Posterior vena cava (tissue), 2 donors: ENCODE measurements at regions of chr5 and their contacts with region 1.

Region 1: DNA sequence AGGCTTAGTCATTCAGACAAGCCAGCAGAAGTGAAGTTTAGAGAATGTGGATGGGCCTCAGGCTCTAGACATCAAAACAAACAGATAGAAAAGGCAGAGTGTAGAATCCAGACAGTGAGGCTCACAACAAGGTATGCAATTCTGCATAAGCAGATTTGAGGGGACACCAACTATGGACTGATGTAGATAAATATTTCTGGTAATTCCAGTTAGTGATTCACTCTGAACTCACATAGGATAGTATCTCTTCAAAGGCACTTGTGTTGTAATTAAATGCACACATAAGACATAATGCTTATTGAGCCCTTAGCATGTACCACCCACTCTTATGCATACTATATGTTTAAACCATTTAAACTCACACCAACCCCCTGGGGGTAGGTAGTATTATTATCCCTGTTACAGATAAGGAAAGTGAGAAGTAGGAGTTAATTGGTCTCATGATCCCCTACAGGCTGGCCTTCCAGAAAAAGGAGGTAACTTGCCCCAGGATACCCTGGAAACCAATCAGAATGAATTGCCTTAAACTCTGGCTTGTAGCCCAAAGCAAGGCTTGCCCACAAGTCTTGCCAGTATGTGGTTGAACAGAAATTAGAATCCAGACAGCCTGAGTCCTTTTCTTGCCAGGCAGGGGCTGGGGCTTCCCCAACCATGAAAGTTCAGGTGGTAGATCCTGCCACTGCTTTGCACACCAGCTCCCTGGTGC is 39.5 kb upstream of the HSPB3 start:
- DNase-seq: no peak

Region 2: DNA sequence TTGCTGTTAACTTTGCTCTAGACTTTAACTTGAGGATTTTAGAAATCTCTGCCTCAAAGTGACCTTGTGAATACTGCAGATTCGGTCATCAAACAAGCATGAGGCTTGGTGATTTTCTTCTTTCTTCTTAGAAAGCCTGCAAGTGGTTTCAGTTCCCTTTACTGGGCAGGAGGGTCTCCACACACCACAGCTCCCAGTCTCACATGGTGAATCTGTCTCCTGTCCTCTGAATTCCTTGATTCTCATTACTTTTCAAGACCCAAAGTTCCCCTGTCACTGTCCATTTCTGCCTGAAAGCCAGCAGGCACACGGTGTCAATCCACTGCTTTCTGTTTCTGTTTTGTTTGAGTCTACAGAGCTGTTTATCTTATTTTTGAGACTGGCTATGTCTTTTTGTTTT is 53.6 kb after region 1 on chr5:
- intact Hi-C with region 1: loop called in 1 of 2 experiments (anchors 5 kb)
- DNase-seq: no peak